Prostate gland (tissue), 2 donors: ENCODE measurements at regions of chr9 and their contacts with region 1.

Region 1: GRCh38 chr9:130235897-130236668 is 29.5 kb upstream of the HMCN2 start:
- DNase-seq: peak; percentile 46
- H3K4me3 ChIP-seq: no peak overlapping the region
- H3K27ac ChIP-seq: peak overlapping the region; percentile 50 to 58
- H3K4me1 ChIP-seq: no peaks in the 10 kb centered on the region
- H3K27me3 ChIP-seq: no peaks in the 10 kb centered on the region
- CTCF ChIP-seq: peak; percentile 96 to 100 (median 98)
- POLR2A ChIP-seq: no peak

Region 2: GRCh38 chr9:129988607-129989361 is 247.3 kb before region 1 on chr9:
- intact Hi-C with region 1: no loop called
- DNase-seq: no peak
- H3K4me3 ChIP-seq: no peak overlapping the region
- H3K27ac ChIP-seq: no peak overlapping the region
- H3K4me1 ChIP-seq: no peaks in the 10 kb centered on the region
- H3K27me3 ChIP-seq: no peaks in the 10 kb centered on the region
- CTCF ChIP-seq: no peak
- POLR2A ChIP-seq: no peak

Region 3: DNA sequence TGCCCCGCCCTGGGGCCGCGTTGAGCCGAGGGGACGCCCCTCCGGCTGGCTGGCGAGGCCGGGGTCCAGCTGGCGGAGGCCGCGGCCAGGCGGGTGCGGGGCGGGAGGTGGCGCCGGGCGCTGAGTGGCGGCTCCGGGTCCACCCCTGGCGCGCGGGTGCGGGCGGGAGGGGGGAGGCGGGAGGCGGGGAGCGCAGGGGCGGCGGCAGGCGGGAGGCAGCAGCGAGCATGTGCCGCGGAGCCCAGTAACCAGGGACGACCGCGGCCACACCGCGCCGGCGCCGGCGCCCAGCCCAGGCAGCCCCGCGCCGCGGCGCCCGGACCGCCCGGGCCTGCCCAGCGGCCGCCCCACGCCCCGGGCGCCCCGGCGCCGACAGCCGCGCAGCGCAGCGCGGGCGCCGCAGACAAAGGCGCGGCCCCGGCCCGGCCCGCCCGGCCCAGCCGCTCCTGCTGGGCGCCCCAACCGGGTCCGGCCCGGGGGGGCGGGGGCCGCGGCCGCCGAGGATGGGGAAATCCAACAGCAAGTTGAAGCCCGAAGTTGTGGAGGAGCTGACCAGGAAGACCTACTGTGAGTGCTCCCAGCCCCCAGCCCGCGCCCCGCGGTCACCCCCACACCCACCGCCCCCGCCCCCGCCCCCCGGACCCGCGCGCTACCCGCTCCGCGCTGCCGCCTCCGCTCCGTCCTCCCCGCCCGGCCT is 63.8 kb before region 1 on chr9 and contains the start of gene NCS1:
- intact Hi-C with region 1: loop called (anchors 5 kb)
- DNase-seq: peak; percentile 77
- H3K4me3 ChIP-seq: peak within 1 kb of the TSS; percentile 57 to 63
- H3K27ac ChIP-seq: peak within 1 kb of the TSS; percentile 79
- H3K4me1 ChIP-seq: no peaks in the 10 kb centered on the region
- H3K27me3 ChIP-seq: no peaks in the 10 kb centered on the region
- CTCF ChIP-seq: no peak
- POLR2A ChIP-seq: no peak
- total RNA-seq, gene NCS1: 19.1 to 28.5 TPM

Region 4: DNA sequence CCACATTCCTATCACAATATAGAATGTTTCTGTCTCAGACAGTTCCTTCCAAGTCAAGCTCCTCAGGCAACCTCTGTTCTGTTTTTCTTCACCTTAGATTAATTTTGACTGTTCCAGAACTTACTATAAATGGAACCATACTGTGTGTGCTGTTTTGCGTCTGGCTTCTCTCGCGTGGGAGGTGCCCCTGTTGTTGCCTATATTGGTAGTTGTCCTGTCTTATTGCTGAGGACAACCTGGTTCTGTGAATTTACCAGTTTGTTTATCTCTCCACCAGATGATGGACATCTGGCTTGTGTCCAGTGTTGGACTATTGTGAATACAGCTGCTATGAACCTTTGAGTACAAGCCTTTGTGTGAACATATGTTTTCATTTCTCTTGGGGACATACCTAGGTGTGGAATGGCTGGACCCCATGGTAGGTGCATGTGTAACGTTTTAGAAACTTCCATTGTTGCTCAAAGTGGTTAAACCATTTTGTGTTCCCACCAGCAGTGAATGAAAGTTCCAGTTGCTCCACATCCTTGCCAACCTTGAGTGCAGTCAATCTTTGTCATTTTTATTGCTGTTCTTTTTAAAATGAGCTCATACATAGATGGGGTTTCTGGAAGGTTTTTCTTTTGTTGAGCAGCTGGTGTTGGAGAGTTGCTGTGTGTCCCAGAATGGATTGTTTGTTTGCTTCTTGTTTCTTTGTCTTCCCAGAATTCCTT is 47.6 kb after region 1 on chr9:
- intact Hi-C with region 1: no loop called
- DNase-seq: no peak
- H3K4me3 ChIP-seq: no peak overlapping the region
- H3K27ac ChIP-seq: no peak overlapping the region
- H3K4me1 ChIP-seq: no peaks in the 10 kb centered on the region
- H3K27me3 ChIP-seq: no peaks in the 10 kb centered on the region
- CTCF ChIP-seq: no peak
- POLR2A ChIP-seq: no peak

Region 5: DNA sequence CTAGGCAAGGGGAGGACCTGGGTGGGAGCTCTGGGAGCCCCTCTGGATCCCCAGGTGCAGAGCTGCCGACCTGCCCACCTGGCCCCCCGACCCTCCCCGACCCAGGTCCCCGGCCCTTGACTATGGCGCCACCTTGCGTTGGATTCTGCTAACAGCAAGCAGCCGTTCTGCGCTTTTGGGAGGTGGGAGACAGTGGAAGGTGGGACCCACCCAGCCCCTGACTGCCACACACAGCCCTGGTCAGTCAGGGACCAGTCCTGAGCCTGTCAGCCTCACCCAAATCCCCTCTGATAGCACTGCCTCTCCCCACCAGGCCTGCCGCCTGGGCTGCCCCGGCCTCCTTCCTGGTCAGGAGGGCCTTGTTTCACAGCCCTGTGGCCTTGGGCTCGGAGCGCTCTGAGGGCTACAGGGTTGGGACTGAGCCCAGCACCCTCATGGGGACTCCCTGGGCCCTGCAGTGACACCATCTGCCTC is 107.4 kb after region 1 on chr9:
- intact Hi-C with region 1: loop called (anchors 2 kb)
- DNase-seq: no peak
- H3K4me3 ChIP-seq: no peak overlapping the region
- H3K27ac ChIP-seq: no peak overlapping the region
- H3K4me1 ChIP-seq: no peaks in the 10 kb centered on the region
- H3K27me3 ChIP-seq: no peaks in the 10 kb centered on the region
- CTCF ChIP-seq: peak; percentile 34 to 73 (median 66)
- POLR2A ChIP-seq: no peak